ENCODE measurements at regions of chr1 and their contacts with region 1.

Region 1: DNA sequence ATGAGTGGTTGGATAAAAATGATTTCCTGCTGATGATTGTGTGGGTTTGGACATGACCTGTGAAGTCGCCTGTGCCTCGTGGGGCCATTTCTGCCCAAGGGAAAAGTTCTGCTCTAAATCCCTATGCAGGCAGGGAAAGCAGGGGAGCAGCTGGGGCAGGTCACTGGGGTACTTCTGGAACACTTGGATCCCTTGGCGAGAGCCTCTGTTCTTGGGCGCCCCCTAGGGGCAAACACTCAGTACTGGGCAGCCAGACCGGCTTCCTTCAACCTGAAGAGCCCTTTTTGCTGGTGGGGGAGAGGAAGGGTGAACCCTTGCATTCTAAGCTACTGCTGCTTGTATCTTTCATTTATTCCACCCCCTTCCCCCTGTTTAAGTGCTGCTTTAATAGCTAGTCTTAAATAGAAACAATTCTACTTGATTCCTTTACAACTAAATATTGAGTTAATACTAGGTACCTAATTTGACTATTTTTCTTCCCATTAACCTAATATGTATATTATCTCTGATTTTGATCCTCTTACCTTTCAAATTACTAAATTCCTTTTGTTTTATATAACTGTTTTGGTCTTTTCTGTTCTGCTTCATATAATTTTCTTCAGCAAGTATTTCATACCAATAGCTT is 5.1 kb upstream of the CLEC20A start:
- DNase-seq: peak; percentile 68 to 81
- H3K4me3 ChIP-seq: no peak overlapping the region
- H3K27ac ChIP-seq: no peak overlapping the region
- H3K4me1 ChIP-seq: no peaks in the 10 kb centered on the region
- H3K27me3 ChIP-seq: no peaks in the 10 kb centered on the region
- CTCF ChIP-seq: peak; percentile 58 to 89 (median 74)
- POLR2A ChIP-seq: no peak

Region 2: DNA sequence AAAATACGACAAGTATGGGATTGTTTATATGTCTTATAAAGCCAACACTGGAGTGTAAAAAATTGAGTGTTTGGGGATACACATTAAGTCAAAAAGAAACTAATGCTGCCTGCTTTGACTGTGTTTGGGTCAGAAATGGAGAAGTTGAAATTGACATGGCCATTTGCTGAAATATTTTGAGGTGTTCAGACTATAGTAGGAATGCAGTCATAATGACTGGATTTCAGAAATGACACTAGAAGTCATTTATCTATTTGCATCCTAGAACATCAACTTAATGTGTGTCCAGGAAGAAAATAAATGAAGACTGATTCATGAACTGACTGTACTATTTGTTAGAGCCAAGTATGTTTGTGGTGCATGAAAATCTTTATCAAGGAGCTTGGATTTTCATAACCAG is 379.5 kb before region 1 on chr1:
- intact Hi-C with region 1: no loop called
- DNase-seq: no peak
- H3K4me3 ChIP-seq: no peak overlapping the region
- H3K27ac ChIP-seq: no peak overlapping the region
- H3K4me1 ChIP-seq: peaks cover 3 to 10% of the 10 kb centered on the region in 2 donors
- H3K27me3 ChIP-seq: no peaks in the 10 kb centered on the region
- CTCF ChIP-seq: no peak
- POLR2A ChIP-seq: no peak

Region 3: DNA sequence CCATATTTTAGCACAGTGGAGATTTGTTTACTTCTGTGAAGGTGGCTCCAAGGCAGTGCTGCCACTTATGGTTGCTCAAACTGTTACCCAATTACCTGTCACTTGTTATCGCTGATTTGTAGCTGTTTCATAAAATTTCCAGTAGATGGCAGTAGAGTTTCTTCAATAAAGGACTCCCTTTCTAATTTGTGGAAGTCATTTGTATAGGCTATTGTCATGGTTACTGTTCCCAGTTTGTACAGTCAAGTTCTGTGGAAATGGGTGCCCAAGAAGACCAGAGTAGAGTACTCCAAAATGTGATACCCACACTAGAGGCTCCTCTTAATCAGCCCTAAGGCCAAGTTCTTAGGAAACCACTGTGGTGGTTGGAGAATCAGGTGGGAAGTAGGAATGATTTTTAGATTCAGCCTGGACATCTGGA is 191.1 kb before region 1 on chr1:
- intact Hi-C with region 1: loop called (anchors 5 kb)
- DNase-seq: no peak
- H3K4me3 ChIP-seq: no peak overlapping the region
- H3K27ac ChIP-seq: no peak overlapping the region
- H3K4me1 ChIP-seq: peaks cover 0 to 6% of the 10 kb centered on the region in 2 donors
- H3K27me3 ChIP-seq: no peaks in the 10 kb centered on the region
- CTCF ChIP-seq: peak; percentile 20 to 85 (median 64)
- POLR2A ChIP-seq: no peak

Measured in thyroid gland (tissue), 4 donors.